MCF 10A (cell line): ENCODE measurements at regions of chr2 and their contacts with region 1.

Region 1: GRCh38 chr2:152335010-152335725 is at the start of gene FMNL2:
- DNase-seq: peak; percentile 82
- H3K4me3 Mint-ChIP-seq: peak within 1 kb of the TSS; percentile 94
- H3K27ac Mint-ChIP-seq: peak within 1 kb of the TSS; percentile 91
- H3K4me1 Mint-ChIP-seq: peaks cover 34% of the 10 kb centered on the region
- H3K27me3 Mint-ChIP-seq: no peaks in the 10 kb centered on the region
- CTCF ChIP-seq: no peak
- total RNA-seq, gene FMNL2: 72.9 and 76.5 TPM in 2 replicates

Region 2: GRCh38 chr2:152175458-152176325 is 159.5 kb before region 1 on chr2 and contains the start of gene STAM2:
- CTCF ChIA-PET with region 1: interaction called, 7 read pairs
- POLR2A ChIA-PET with region 1: interaction called, 14 read pairs
- intact Hi-C with region 1: loop called (anchors 5 kb)
- DNase-seq: peak; percentile 92
- H3K4me3 Mint-ChIP-seq: peak within 1 kb of the TSS; percentile 94
- H3K27ac Mint-ChIP-seq: peak within 1 kb of the TSS; percentile 100
- H3K4me1 Mint-ChIP-seq: peaks cover 16% of the 10 kb centered on the region
- H3K27me3 Mint-ChIP-seq: no peaks in the 10 kb centered on the region
- CTCF ChIP-seq: peak; percentile 97
- total RNA-seq, gene STAM2: 27.6 and 35.3 TPM in 2 replicates

Region 3: GRCh38 chr2:152255921-152256320 is 79.2 kb before region 1 on chr2:
- CTCF ChIA-PET with region 1: no interaction called
- POLR2A ChIA-PET with region 1: no interaction called
- intact Hi-C with region 1: no loop called
- DNase-seq: no peak
- H3K4me3 Mint-ChIP-seq: no peak overlapping the region
- H3K27ac Mint-ChIP-seq: no peak overlapping the region
- H3K4me1 Mint-ChIP-seq: no peaks in the 10 kb centered on the region
- H3K27me3 Mint-ChIP-seq: no peaks in the 10 kb centered on the region
- CTCF ChIP-seq: no peak

Region 4: GRCh38 chr2:152407204-152407721 is 72.1 kb after region 1 on chr2:
- CTCF ChIA-PET with region 1: no interaction called
- POLR2A ChIA-PET with region 1: interaction called, 16 read pairs
- intact Hi-C with region 1: no loop called
- DNase-seq: peak; percentile 71
- H3K4me3 Mint-ChIP-seq: peak overlapping the region; percentile 71
- H3K27ac Mint-ChIP-seq: peak overlapping the region; percentile 55
- H3K4me1 Mint-ChIP-seq: peaks cover 77% of the 10 kb centered on the region
- H3K27me3 Mint-ChIP-seq: no peaks in the 10 kb centered on the region
- CTCF ChIP-seq: no peak

Region 5: DNA sequence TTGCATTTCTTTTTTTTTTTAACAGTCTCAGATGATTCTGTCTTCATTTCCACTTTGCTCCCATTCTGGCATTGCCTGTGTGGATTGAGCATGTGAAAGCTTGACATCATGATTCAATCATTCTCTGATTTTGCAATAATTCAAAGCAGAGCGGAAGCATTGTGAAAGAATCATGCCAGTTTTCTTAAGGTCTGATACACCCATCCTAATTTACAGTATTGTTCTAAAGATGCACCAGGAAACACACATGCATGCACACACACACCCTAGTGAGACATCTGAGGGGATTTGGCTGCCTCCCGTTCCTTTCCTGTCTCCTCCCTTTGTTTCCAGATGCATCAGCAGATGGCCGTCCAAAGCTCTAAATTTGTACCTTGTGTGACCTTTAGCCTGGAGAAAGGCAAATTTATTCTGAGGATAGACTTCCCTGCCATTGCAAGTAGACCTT is 97.1 kb after region 1 on chr2:
- CTCF ChIA-PET with region 1: no interaction called
- POLR2A ChIA-PET with region 1: interaction called, 11 read pairs
- intact Hi-C with region 1: loop called (anchors 2 kb)
- DNase-seq: peak; percentile 96
- H3K4me3 Mint-ChIP-seq: peak overlapping the region; percentile 8
- H3K27ac Mint-ChIP-seq: peak overlapping the region; percentile 83
- H3K4me1 Mint-ChIP-seq: peaks cover 39% of the 10 kb centered on the region
- H3K27me3 Mint-ChIP-seq: no peaks in the 10 kb centered on the region
- CTCF ChIP-seq: no peak

Region 6: DNA sequence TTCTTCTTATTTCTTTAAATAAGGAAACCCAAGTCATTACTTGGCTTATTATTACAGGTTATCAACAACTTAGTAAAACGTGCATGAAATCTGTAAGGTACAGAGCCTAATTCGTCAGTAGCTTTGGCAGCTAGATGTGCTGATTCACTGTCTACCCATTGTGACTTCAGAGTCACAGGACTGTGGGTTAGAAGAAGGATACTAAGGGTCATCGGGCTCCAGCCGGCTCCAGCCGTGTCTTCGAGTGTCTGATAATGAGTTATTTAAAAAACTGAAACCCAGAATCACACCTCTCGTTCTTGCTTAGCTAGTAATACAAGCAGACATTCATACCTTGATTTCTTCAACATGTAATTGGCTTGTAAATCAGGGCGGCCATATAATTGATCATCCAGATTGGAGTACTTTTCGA is 170.3 kb after region 1 on chr2:
- CTCF ChIA-PET with region 1: interaction called, 3 read pairs
- POLR2A ChIA-PET with region 1: interaction called, 28 read pairs
- intact Hi-C with region 1: no loop called
- DNase-seq: peak; percentile 77
- H3K4me3 Mint-ChIP-seq: peak overlapping the region; percentile 58
- H3K27ac Mint-ChIP-seq: peak overlapping the region; percentile 91
- H3K4me1 Mint-ChIP-seq: peaks cover 47% of the 10 kb centered on the region
- H3K27me3 Mint-ChIP-seq: no peaks in the 10 kb centered on the region
- CTCF ChIP-seq: no peak

Region 7: DNA sequence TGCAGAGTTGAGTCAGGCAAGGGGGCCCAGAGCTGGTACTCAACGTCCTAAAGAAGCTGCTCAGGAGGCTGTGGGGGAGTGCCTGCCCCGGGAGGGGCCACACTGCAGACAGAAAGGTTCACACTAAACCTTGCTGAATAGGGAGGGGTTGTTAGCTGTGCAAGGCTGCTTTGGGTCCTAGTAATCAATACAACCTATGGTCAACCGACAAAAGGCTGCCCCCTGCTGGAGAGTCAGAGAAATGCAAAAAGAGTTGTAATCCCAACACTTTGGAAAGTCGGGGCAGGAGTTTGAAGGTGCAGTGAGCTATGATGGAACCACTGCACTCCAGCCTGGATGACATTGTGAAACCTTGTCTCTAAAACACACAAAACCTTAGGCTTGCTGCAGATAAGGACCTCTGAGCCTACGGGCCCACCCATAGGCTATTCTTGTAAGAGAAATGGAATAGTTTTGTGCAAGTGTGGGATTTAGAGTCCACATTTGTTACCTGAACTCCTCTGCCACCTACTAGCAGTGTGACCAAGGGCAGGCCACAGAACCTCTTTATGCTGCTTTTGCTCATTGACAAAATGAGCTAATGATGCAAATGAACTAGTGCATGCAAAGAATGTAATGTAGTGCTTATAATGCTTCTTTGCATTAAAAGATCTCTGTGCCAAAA is 300.6 kb after region 1 on chr2:
- CTCF ChIA-PET with region 1: interaction called, 4 read pairs
- POLR2A ChIA-PET with region 1: no interaction called
- intact Hi-C with region 1: loop called (anchors 5 kb)
- DNase-seq: peak; percentile 72
- H3K4me3 Mint-ChIP-seq: no peak overlapping the region
- H3K27ac Mint-ChIP-seq: no peak overlapping the region
- H3K4me1 Mint-ChIP-seq: no peaks in the 10 kb centered on the region
- H3K27me3 Mint-ChIP-seq: no peaks in the 10 kb centered on the region
- CTCF ChIP-seq: peak; percentile 77